ENCODE measurements at regions of chr5 and their contacts with region 1.

Region 1: DNA sequence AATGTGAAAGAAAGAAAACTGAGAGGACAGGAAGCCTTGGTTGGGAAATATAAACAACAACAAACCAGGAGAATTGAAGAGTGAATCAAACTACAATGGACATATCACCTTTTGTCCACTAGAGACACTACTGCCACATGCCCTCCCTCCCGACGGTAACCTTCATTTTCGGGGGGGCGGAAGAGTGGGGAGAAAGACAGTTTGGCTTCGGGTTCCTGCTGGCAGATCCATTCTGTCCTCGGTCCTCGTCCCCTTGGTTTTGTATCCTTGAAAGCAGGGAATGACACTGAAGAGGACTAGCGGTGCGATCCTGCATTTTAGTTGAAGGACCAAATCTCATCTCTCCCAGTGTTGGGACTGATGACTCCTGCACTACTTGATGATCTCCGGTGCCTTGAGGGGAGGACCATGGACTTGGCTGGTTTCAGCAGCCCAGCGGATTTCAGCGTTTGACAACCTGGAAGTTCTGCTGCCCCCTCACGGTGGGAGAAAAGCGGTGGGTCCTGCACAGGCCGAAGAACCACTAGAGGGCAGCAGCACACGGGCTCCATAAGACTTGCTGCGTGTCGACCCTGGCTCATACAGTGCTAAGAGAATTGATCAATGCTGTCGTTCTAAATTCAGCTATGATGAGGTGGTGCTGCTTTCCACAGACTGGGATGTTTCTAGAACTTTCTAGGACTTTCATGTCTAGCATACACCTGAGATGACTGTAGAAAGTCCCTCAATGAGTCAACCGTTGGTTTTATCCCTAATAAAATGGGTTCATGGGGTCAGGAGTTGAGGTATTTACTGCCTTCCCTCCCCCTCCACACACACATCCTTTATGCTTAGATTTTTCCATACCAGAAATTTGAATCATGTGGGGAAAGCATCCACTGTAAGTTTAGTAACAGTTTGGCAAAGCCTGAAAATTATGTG is 15.1 kb upstream of the ZNF131 start:
- DNase-seq: peak; percentile 88
- H3K4me3 ChIP-seq: peak overlapping the region; percentile 6 to 42 (median 35)
- H3K27ac ChIP-seq: no peak overlapping the region
- H3K4me1 ChIP-seq: peaks cover 4% of the 10 kb centered on the region
- H3K27me3 ChIP-seq: no peaks in the 10 kb centered on the region
- CTCF ChIP-seq: peak; percentile 100

Region 2: GRCh38 chr5:42908509-42909488 is 196.8 kb before region 1 on chr5:
- CTCF ChIA-PET with region 1: interaction called, 3 read pairs
- dilution Hi-C with region 1: no loop called
- in situ Hi-C with region 1: loop called (anchors 5 to 10 kb)
- intact Hi-C with region 1: loop called (anchors 1 kb)
- DNase-seq: peak; percentile 71
- H3K4me3 ChIP-seq: peak overlapping the region; percentile 45 to 52 (median 46)
- H3K27ac ChIP-seq: no peak overlapping the region
- H3K4me1 ChIP-seq: no peaks in the 10 kb centered on the region
- H3K27me3 ChIP-seq: no peaks in the 10 kb centered on the region
- CTCF ChIP-seq: peak; percentile 79 to 86

Region 3: GRCh38 chr5:43034591-43034968 is 71.0 kb before region 1 on chr5:
- CTCF ChIA-PET with region 1: no interaction called
- dilution Hi-C with region 1: no loop called
- in situ Hi-C with region 1: no loop called
- intact Hi-C with region 1: no loop called
- DNase-seq: no peak
- H3K4me3 ChIP-seq: no peak overlapping the region
- H3K27ac ChIP-seq: no peak overlapping the region
- H3K4me1 ChIP-seq: no peaks in the 10 kb centered on the region
- H3K27me3 ChIP-seq: no peaks in the 10 kb centered on the region
- CTCF ChIP-seq: no peak

Region 4: DNA sequence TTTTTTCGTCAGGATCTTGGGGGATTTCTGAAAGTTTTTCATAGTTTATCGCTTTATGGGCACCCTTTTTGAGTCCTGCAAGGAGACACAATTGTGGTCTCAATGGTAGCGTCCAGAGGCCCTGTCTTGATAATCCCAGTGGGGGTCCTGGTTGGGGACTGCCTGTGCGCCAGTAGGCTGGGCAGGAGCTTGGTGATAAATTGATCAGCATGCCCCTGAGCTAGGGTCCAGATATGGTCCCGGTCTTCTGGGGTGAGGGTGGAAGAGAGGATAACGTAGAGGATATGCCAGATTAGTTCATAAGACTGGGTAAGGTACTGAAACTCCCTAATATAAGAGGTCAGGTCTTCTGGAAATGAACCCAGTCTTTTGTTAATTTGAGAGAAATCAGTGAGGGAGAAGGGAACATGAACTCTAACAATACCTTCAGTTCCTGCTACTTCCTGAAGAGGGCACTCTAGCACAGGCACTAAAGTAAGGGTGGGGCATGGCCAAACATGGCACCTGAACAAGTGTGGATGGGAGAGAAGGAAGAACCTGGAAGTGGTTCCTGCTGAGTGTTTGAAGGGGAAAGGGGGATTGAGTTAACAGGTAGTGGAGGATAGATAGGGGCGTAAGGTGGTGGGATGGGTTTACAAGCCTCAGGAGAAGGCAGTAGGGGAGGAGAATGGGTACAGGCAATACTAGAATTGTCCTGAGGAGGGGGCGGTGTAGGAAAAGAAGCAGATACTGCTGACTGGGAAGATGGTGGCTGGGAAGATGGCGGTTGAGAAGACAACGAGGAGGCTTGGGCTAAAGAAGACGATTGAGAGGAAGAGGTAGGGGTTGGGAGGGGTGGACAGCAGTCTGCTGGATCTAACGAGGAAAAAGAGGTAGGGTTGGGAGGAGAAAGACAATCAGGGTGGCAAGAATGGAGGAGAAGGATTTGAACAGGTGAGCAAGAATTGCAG is 31.8 kb before region 1 on chr5:
- CTCF ChIA-PET with region 1: no interaction called
- dilution Hi-C with region 1: no loop called
- in situ Hi-C with region 1: no loop called
- intact Hi-C with region 1: loop called (anchors 1 kb)
- DNase-seq: peak; percentile 21
- H3K4me3 ChIP-seq: no peak overlapping the region
- H3K27ac ChIP-seq: no peak overlapping the region
- H3K4me1 ChIP-seq: peaks cover 4% of the 10 kb centered on the region
- H3K27me3 ChIP-seq: no peaks in the 10 kb centered on the region
- CTCF ChIP-seq: peak; percentile 66 to 67

Region 5: DNA sequence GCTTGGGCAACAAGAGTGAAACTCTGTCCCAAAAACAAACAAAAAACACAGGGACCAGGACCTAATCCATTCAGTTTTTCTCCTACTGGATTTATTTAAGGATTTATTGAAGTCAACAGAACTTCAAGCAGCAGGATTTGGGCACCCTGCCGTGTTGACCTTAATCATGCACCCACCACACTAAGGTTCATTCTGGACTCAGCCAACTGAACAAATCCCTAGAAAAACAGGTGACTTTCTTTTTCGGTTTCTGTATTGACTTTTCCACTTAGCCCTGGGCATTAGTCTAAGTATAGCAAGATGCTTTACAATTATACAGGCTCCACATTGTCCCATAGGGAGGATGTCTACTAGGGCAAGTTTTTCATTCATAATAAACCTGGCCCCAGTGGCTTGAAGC is 45.1 kb after region 1 on chr5:
- CTCF ChIA-PET with region 1: no interaction called
- dilution Hi-C with region 1: no loop called
- in situ Hi-C with region 1: no loop called
- intact Hi-C with region 1: loop called (anchors 1 kb)
- DNase-seq: no peak
- H3K4me3 ChIP-seq: no peak overlapping the region
- H3K27ac ChIP-seq: no peak overlapping the region
- H3K4me1 ChIP-seq: no peaks in the 10 kb centered on the region
- H3K27me3 ChIP-seq: no peaks in the 10 kb centered on the region
- CTCF ChIP-seq: no peak

Measured in mammary epithelial cell (primary cell).